Right lobe of liver (tissue), 6 donors: ENCODE measurements at regions of chr5 and their contacts with region 1.

Region 1: GRCh38 chr5:146965761-146966659 is 87.5 kb upstream of the PPP2R2B start:
- DNase-seq: peak in 1 of 3 donors; percentile 59
- ATAC-seq: peak; percentile 98 to 100 (median 98)
- H3K4me3 ChIP-seq: no peak overlapping the region
- H3K27ac ChIP-seq: no peak overlapping the region
- H3K4me1 ChIP-seq: no peaks in the 10 kb centered on the region
- H3K27me3 ChIP-seq: no peaks in the 10 kb centered on the region
- CTCF ChIP-seq: peak; percentile 91 to 98 (median 92)
- POLR2A ChIP-seq: no peak

Region 2: DNA sequence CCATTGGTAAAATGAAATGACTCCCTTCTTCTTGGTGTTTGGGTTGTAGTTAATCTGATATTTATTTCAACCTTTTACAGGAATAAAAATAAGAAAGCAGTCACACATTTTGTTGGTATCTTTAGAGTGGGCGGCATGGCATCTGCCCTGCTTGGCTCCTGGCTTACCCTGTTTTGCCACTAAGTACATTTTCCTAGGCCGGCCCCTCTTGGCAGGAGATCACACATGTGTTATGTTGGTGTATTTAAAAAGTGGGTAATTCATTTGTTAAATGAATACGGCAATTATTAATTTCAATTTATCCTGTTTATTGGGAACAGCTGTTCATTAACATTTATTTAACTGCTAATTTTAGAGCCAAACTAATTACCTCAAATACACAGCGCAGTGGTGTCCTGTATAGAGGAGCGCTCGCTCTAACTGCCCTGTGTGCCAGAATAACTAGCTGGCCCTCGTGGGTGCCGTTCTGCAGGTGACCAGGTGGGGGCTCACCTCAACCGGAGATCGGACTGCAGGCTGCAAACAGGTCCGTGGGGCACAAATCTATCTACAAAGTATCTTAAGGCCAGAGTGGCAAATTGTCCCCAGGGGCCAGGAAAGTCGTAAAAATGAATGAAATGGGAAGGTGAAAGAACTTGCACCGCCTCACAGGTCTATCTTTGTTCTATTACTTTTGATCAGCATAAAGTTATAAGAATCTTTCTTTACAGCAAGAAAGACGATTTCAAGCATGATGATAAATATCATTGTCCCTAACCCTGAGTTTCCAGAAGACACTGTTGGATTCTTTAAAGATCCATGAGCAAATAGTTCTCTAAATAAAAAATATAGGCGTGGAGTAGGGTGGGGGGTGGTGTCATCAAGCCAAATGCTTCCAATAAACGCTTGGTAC is 423.8 kb before region 1 on chr5:
- intact Hi-C with region 1: loop called (anchors 10 kb)
- DNase-seq: peak; percentile 76 to 79 (median 78)
- ATAC-seq: peak; percentile 99 to 100 (median 100)
- H3K4me3 ChIP-seq: no peak overlapping the region
- H3K27ac ChIP-seq: no peak overlapping the region
- H3K4me1 ChIP-seq: peaks cover 0 to 5% (median 0%) of the 10 kb centered on the region in 4 donors
- H3K27me3 ChIP-seq: no peaks in the 10 kb centered on the region
- CTCF ChIP-seq: peak; percentile 74 to 86 (median 80)
- POLR2A ChIP-seq: no peak

Region 3: DNA sequence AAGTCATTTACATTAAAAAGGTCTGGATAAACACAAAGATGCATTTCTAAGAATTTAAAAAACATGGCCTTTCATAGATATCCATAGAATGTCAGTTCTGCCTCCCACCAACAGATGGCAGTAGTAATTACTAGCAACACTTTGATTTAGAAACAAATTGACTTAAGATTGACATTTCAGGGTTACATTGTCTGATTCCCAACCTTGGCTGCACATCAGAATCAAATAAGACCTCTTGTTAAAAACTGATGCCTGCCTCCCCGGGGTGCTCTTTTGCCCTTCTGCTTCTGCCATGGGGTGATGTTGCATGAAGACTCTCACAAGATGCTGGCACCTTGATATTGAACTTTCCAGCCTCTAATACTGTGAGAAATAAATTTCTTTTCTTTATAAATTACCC is 303.8 kb before region 1 on chr5:
- intact Hi-C with region 1: loop called in 1 of 2 experiments (anchors 10 kb)
- DNase-seq: no peak
- ATAC-seq: peak in 1 of 4 donors; percentile 32
- H3K4me3 ChIP-seq: no peak overlapping the region
- H3K27ac ChIP-seq: no peak overlapping the region
- H3K4me1 ChIP-seq: no peaks in the 10 kb centered on the region
- H3K27me3 ChIP-seq: no peaks in the 10 kb centered on the region
- CTCF ChIP-seq: peak; percentile 54 to 71 (median 64)
- POLR2A ChIP-seq: no peak